Endothelial cell of umbilical vein (primary cell): ENCODE measurements at regions of chr3 and their contacts with region 1.

Region 1: DNA sequence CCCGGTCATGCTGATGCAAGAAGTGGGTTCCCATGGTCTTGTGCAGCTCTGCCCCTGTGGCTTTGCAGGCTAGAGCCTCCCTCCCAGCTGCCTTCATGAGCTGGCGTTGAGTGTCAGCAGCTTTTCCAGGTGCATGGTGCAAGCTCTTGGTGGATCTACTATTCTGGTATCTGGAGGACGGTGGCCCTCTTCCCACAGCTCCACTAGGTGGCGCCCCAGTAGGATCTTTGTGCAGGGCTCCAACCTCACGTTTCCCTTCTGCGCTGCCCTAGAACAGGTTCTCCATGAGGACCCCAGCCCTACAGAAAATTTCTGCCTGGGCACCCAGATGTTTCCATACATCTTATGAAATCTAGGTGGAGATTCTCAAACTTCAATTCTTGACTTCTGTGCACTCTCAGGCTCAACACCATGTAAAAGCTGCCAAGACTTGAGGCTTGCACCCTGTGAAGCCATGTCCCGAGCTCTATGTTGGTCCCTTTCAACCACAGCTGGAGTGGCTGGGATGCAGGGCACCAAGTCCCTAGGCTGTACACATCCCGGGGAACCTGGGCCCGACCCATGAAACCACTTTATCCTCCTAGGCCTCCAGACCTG is 238.4 kb upstream of the MDFIC2 start:
- DNase-seq: peak; percentile 75
- H3K4me3 ChIP-seq: no peak overlapping the region
- H3K27ac ChIP-seq: no peak overlapping the region
- H3K4me1 ChIP-seq: no peaks in the 10 kb centered on the region
- H3K27me3 ChIP-seq: no peaks in the 10 kb centered on the region
- CTCF ChIP-seq: peak; percentile 63 to 85
- POLR2A ChIP-seq: no peak

Region 2: DNA sequence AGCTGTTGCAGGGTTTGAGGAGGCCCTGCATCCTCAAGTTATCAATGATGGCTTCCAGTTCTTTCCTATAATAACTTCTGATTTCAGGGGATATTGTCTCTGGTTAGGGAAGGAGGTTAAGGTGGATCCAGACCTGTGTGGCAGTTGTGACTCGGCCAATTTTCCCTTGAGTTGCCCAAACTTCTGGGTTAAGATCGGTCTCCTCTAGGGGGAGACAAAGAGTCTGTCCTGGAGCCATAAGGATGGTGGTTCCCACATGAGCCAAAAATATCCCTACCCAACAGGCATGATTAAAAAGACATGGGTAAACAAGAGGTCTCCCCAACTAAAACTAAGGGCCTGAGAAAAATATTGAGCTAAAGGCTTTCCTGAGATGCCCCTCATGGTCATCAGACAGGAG is 10.9 kb before region 1 on chr3:
- CTCF ChIA-PET with region 1: interaction called, 28 read pairs
- POLR2A ChIA-PET with region 1: no interaction called
- dilution Hi-C with region 1: no loop called
- intact Hi-C with region 1: no loop called
- DNase-seq: no peak
- H3K4me3 ChIP-seq: no peak overlapping the region
- H3K27ac ChIP-seq: no peak overlapping the region
- H3K4me1 ChIP-seq: no peaks in the 10 kb centered on the region
- H3K27me3 ChIP-seq: peaks cover 11% of the 10 kb centered on the region in 2 experiments
- CTCF ChIP-seq: peak; percentile 13 to 15
- POLR2A ChIP-seq: no peak

Region 3: GRCh38 chr3:70951316-70951715 is 400.5 kb after region 1 on chr3:
- CTCF ChIA-PET with region 1: interaction called, 14 read pairs
- POLR2A ChIA-PET with region 1: no interaction called
- dilution Hi-C with region 1: no loop called
- intact Hi-C with region 1: no loop called
- DNase-seq: no peak
- H3K4me3 ChIP-seq: no peak overlapping the region
- H3K27ac ChIP-seq: no peak overlapping the region
- H3K4me1 ChIP-seq: no peaks in the 10 kb centered on the region
- H3K27me3 ChIP-seq: no peaks in the 10 kb centered on the region
- CTCF ChIP-seq: no peak
- POLR2A ChIP-seq: no peak

Region 4: GRCh38 chr3:71022551-71023335 is 471.9 kb after region 1 on chr3:
- CTCF ChIA-PET with region 1: interaction called, 28 read pairs
- POLR2A ChIA-PET with region 1: no interaction called
- dilution Hi-C with region 1: no loop called
- intact Hi-C with region 1: loop called (anchors 1 kb)
- DNase-seq: peak; percentile 52
- H3K4me3 ChIP-seq: no peak overlapping the region
- H3K27ac ChIP-seq: no peak overlapping the region
- H3K4me1 ChIP-seq: no peaks in the 10 kb centered on the region
- H3K27me3 ChIP-seq: no peaks in the 10 kb centered on the region
- CTCF ChIP-seq: peak; percentile 20 to 30
- POLR2A ChIP-seq: no peak

Region 5: GRCh38 chr3:71305231-71306206 is 754.7 kb after region 1 on chr3:
- CTCF ChIA-PET with region 1: interaction called, 11 read pairs
- POLR2A ChIA-PET with region 1: no interaction called
- dilution Hi-C with region 1: no loop called
- intact Hi-C with region 1: loop called (anchors 2 kb)
- DNase-seq: peak; percentile 71
- H3K4me3 ChIP-seq: peak overlapping the region; percentile 24 to 60 (median 41)
- H3K27ac ChIP-seq: peak overlapping the region; percentile 19
- H3K4me1 ChIP-seq: peaks cover 24% of the 10 kb centered on the region
- H3K27me3 ChIP-seq: no peaks in the 10 kb centered on the region
- CTCF ChIP-seq: no peak
- POLR2A ChIP-seq: no peak

Region 6: GRCh38 chr3:71652781-71653413 is 1102.1 kb after region 1 on chr3:
- CTCF ChIA-PET with region 1: interaction called, 77 read pairs
- POLR2A ChIA-PET with region 1: no interaction called
- dilution Hi-C with region 1: no loop called
- intact Hi-C with region 1: loop called (anchors 1 kb)
- DNase-seq: peak; percentile 78
- H3K4me3 ChIP-seq: no peak overlapping the region
- H3K27ac ChIP-seq: no peak overlapping the region
- H3K4me1 ChIP-seq: peaks cover 9% of the 10 kb centered on the region
- H3K27me3 ChIP-seq: no peaks in the 10 kb centered on the region
- CTCF ChIP-seq: peak; percentile 17 to 42
- POLR2A ChIP-seq: no peak

Region 7: DNA sequence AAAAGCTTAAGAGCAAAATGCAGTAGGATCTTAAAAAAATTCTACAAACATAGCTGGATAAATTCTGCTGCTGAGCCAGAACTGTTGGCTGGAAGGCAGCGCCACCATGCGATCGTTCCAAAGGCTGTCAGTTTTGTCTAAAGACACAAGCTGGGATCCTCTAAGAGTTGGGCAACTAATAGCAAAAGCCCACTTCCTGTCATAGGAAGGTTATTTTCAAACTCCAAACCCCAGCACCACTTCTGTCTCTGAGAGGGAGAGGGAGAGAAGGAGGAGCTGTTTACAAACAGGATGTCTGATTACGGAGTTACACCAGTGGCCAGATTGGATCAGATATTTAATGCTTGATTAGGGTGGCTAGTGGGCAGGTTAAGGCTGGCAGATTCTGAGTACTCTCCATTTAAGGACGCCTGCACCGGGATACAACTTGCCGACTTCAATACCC is 1130.4 kb after region 1 on chr3:
- CTCF ChIA-PET with region 1: interaction called, 45 read pairs
- POLR2A ChIA-PET with region 1: no interaction called
- dilution Hi-C with region 1: no loop called
- intact Hi-C with region 1: no loop called
- DNase-seq: peak; percentile 73
- H3K4me3 ChIP-seq: no peak overlapping the region
- H3K27ac ChIP-seq: no peak overlapping the region
- H3K4me1 ChIP-seq: peaks cover 5% of the 10 kb centered on the region
- H3K27me3 ChIP-seq: no peaks in the 10 kb centered on the region
- CTCF ChIP-seq: peak; percentile 75 to 80
- POLR2A ChIP-seq: no peak